ENCODE measurements at regions of chr7 and their contacts with region 1.

Region 1: DNA sequence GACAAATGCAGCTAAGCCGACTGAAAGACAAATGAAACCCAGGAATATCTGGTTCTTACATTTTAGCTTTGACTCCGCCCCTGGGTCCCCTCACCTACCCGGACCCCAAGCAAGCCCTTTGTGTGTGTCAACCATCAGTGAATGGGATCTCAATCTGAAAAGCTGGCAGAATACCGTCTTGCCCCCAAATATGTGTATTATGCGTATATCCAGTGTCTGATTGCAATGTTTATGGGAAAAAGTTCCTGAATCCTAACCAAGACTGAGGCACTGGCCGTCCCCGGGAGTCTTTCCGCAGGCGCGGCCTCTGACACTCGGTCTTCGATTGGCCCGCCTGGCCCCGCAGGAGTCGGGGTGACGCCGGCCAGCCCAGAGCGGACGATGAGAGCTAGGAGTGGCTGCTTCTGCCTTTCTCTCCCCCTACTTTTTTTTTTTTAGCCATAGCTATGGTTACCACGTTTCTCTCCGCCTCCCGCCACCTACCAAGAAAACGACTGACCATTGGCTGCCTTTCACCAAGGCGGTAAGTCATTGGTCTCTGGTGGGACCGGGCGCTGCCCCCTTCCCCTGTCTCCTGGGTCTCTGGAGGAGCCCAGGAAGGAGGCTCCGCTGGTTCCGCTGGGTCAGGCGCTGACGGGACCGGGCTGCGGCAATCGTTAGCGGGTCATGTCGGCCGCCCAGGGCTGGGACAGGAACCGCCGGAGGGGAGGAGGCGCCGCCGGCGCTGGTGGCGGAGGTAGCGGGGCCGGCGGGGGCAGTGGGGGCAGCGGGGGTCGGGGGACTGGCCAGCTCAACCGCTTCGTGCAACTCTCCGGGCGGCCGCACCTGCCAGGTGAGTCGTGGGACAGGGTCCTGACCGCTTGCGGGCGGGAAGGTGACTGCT is at the start of gene KLHDC10:
- DNase-seq: peak; percentile 99 to 100 (median 100)
- ATAC-seq: peak; percentile 94
- H3K4me3 ChIP-seq: peak within 1 kb of the TSS; percentile 60
- H3K27ac ChIP-seq: peak within 1 kb of the TSS; percentile 78
- H3K4me1 ChIP-seq: peaks cover 11 to 20% of the 10 kb centered on the region in 2 experiments
- H3K27me3 ChIP-seq: no peaks in the 10 kb centered on the region
- CTCF ChIP-seq: 0 out of 6 replicates have a peak, but pooled peaks of 1 of the 3 experiments have one; percentile 1
- EP300 ChIP-seq: peak; percentile 65
- POLR2A ChIP-seq: peak; percentile 91
- RAD21 ChIP-seq: 0 out of 4 replicates have a peak, but pooled peaks of 1 of the 2 experiments have one; percentile 17
- polyA plus RNA-seq, gene KLHDC10: 9.8 to 11.3 TPM

Region 2: GRCh38 chr7:129784783-129785684 is 285.2 kb before region 1 on chr7:
- CTCF ChIA-PET with region 1: no interaction called
- POLR2A ChIA-PET with region 1: no interaction called
- in situ Hi-C with region 1: no loop called
- intact Hi-C with region 1: no loop called
- DNase-seq: peak in 3 of 4 experiments; percentile 63 to 88 (median 79)
- ATAC-seq: peak; percentile 2; the same call in 1 of the 3 replicates
- H3K4me3 ChIP-seq: no peak overlapping the region
- H3K27ac ChIP-seq: no peak overlapping the region
- H3K4me1 ChIP-seq: peaks cover 8 to 50% of the 10 kb centered on the region in 2 experiments; a peak in 3 of 5 replicates
- H3K27me3 ChIP-seq: no peaks in the 10 kb centered on the region
- CTCF ChIP-seq: no peak
- EP300 ChIP-seq: peak; percentile 63
- POLR2A ChIP-seq: no peak
- RAD21 ChIP-seq: no peak

Region 3: GRCh38 chr7:130154501-130155317 is 84.5 kb after region 1 on chr7:
- CTCF ChIA-PET with region 1: interaction called, 3 read pairs
- POLR2A ChIA-PET with region 1: no interaction called
- in situ Hi-C with region 1: no loop called
- intact Hi-C with region 1: loop called (anchors 5 kb)
- DNase-seq: peak; percentile 64 to 76 (median 73)
- ATAC-seq: peak; percentile 70
- H3K4me3 ChIP-seq: no peak overlapping the region
- H3K27ac ChIP-seq: no peak overlapping the region
- H3K4me1 ChIP-seq: peaks cover 0 to 41% of the 10 kb centered on the region in 2 experiments; a peak in 3 of 5 replicates
- H3K27me3 ChIP-seq: no peaks in the 10 kb centered on the region; a peak in 1 of 5 replicates
- CTCF ChIP-seq: peak; percentile 47 to 74 (median 67)
- EP300 ChIP-seq: no peak
- POLR2A ChIP-seq: no peak; the same call in 1 of the 2 replicates
- RAD21 ChIP-seq: peak in 1 of 2 experiments; percentile 55; a peak in 2 of 4 replicates

Region 4: DNA sequence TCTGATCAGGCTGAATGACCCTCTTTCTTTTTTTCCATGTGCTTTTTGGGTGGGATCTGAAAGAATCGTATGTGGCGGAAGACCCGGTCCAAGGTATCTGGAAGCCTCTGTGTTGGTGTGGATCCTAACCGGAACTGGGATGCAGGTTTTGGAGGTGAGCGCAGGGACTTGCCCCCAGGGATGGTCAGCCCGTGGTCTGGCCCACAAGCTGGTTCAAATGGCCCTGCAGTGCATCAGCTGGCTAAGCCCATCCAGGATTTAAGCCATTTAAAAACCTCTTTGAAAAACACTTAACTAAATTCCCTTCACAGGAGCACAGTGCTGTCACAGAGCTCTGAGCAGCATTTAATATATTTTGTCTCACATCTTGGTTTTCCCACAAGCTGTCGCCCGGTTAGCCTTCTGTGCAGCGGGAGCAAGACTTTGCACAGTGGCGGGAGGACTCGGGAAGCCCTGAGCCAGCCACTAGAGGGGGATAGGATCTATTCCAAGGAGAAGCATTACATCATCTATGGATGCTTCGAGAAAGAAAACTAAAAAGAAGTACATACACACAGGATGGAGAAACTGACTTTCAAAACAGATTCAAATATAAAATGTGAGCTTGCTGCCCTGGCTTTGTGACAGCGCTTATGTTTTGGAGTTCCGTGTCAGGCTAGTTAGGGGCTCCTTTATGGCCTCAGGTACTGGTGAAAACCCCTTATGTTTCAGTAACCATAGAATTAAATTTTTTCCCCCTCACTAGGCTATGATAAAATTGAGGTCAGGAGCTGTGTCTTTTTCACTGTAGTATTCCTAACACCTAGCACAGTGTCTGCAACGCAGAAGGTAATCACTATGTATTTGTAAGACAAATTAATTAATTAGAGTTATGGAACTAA is 207.8 kb after region 1 on chr7:
- CTCF ChIA-PET with region 1: interaction called, 4 read pairs
- POLR2A ChIA-PET with region 1: interaction called, 3 read pairs
- in situ Hi-C with region 1: no loop called
- intact Hi-C with region 1: loop called (anchors 5 kb)
- DNase-seq: peak in 3 of 4 experiments; percentile 46 to 69 (median 59)
- ATAC-seq: peak; percentile 96
- H3K4me3 ChIP-seq: no peak overlapping the region
- H3K27ac ChIP-seq: no peak overlapping the region
- H3K4me1 ChIP-seq: peaks cover 1 to 3% of the 10 kb centered on the region in 2 experiments; a peak in 2 of 5 replicates
- H3K27me3 ChIP-seq: peaks cover 24 to 26% of the 10 kb centered on the region in 2 experiments
- CTCF ChIP-seq: peak; percentile 64 to 84 (median 76)
- EP300 ChIP-seq: no peak
- POLR2A ChIP-seq: no peak
- RAD21 ChIP-seq: peak; percentile 58 to 82

Region 5: DNA sequence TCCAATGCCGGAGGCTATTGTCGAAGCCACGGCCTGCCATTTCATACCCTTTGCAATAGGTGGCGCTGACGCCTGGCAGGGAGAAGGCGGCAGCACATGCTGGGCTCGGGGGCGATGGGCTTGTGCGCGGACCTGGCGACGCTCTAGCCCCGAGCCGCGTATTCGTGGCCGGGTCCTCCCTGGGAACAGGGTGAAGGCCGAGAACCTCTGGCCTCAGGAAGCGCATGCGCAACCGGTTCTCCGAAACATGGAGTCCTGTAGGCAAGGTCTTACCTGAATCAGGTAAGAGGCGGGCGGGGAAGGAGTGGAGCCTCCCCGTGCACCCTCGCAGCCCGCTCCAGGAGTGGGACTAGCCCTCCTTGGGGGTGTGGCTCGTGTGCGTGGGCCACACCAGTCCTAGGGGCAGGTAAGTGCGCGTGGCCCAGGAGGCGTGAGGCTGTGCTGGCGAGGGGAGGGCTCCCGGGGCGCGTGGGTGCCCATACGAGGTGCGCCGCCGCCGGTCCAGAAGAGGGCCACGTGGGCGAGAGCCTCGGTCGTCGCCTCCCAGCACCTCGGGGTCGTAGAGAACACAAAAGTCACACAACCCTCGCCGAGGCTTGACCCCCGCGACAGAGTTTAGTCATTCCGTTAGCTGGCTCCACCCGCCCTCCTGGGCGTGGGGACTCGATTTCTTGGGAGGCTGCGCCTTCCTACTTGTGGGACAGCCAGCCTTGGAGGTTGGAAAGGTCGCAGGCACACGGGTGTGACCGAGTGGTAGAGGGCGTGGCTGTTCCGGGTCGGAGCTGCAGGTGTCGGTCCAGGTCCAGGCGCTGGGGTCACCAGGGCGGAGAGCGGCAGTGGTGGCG is 416.1 kb after region 1 on chr7:
- CTCF ChIA-PET with region 1: no interaction called
- POLR2A ChIA-PET with region 1: no interaction called
- in situ Hi-C with region 1: no loop called
- intact Hi-C with region 1: loop called (anchors 5 kb)
- DNase-seq: peak; percentile 31 to 58 (median 46)
- ATAC-seq: peak; percentile 81
- H3K4me3 ChIP-seq: no peak overlapping the region
- H3K27ac ChIP-seq: no peak overlapping the region
- H3K4me1 ChIP-seq: peaks cover 0 to 13% of the 10 kb centered on the region in 2 experiments; a peak in 3 of 5 replicates
- H3K27me3 ChIP-seq: peaks cover 17 to 52% of the 10 kb centered on the region in 2 experiments; a peak in 4 of 5 replicates
- CTCF ChIP-seq: peak; percentile 73 to 85 (median 80)
- EP300 ChIP-seq: no peak
- POLR2A ChIP-seq: no peak
- RAD21 ChIP-seq: peak; percentile 28 to 73; a peak in 3 of 4 replicates

Region 6: GRCh38 chr7:130695840-130696239 is 625.6 kb after region 1 on chr7:
- CTCF ChIA-PET with region 1: interaction called, 15 read pairs
- POLR2A ChIA-PET with region 1: no interaction called
- in situ Hi-C with region 1: no loop called
- intact Hi-C with region 1: no loop called
- DNase-seq: peak; percentile 36 to 62 (median 50)
- ATAC-seq: peak; percentile 80
- H3K4me3 ChIP-seq: no peak overlapping the region
- H3K27ac ChIP-seq: no peak overlapping the region
- H3K4me1 ChIP-seq: no peaks in the 10 kb centered on the region
- H3K27me3 ChIP-seq: peaks cover 0 to 4% of the 10 kb centered on the region in 2 experiments; a peak in 2 of 5 replicates
- CTCF ChIP-seq: peak; percentile 76 to 99 (median 99)
- EP300 ChIP-seq: no peak
- POLR2A ChIP-seq: no peak
- RAD21 ChIP-seq: peak; percentile 61 to 77

Region 7: DNA sequence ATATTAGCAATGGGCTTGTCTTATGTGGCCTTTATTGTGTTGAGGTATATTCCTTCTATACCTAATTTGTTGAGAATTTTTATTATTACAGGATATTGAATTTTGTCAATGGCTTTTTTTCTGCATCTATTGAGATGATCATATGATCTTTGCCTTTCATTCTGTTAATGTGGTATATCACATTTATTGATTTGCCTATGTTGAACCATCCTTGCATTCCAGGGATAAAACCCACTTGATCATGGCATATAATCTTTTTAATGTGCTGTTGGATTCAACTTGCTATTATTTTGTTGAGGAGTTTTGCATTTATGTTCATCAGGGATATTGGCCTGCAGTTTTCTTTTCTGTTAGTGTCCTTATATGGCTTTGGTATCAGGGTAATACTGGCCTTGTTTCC is 755.6 kb after region 1 on chr7:
- CTCF ChIA-PET with region 1: no interaction called
- POLR2A ChIA-PET with region 1: no interaction called
- in situ Hi-C with region 1: loop called (anchors 5 kb)
- intact Hi-C with region 1: no loop called
- DNase-seq: no peak
- ATAC-seq: no peak
- H3K4me3 ChIP-seq: no peak overlapping the region
- H3K27ac ChIP-seq: no peak overlapping the region
- H3K4me1 ChIP-seq: no peaks in the 10 kb centered on the region
- H3K27me3 ChIP-seq: peaks cover 2 to 12% of the 10 kb centered on the region in 2 experiments; a peak in 2 of 5 replicates
- CTCF ChIP-seq: no peak
- EP300 ChIP-seq: no peak
- POLR2A ChIP-seq: no peak
- RAD21 ChIP-seq: no peak